Naive thymus-derived CD4-positive, alpha-beta T cell (primary cell): ENCODE measurements at regions of chr16 and their contacts with region 1.

Region 1: GRCh38 chr16:56576585-56577293 is 11.9 kb downstream of the MT4 start:
- DNase-seq: peak; percentile 81 to 92 (median 88)
- ATAC-seq: peak; percentile 100
- H3K4me3 ChIP-seq: no peak overlapping the region
- H3K4me3 Mint-ChIP-seq: no peak overlapping the region
- H3K27ac ChIP-seq: no peak overlapping the region
- H3K27ac Mint-ChIP-seq: peak overlapping the region; percentile 34 to 89 (median 76)
- H3K4me1 ChIP-seq: peaks cover 3 to 8% of the 10 kb centered on the region in 2 donors
- H3K4me1 Mint-ChIP-seq: peaks cover 0 to 9% (median 8%) of the 10 kb centered on the region in 7 donors
- H3K27me3 ChIP-seq: no peaks in the 10 kb centered on the region
- H3K27me3 Mint-ChIP-seq: peaks cover 0 to 19% (median 0%) of the 10 kb centered on the region in 5 donors

Region 2: DNA sequence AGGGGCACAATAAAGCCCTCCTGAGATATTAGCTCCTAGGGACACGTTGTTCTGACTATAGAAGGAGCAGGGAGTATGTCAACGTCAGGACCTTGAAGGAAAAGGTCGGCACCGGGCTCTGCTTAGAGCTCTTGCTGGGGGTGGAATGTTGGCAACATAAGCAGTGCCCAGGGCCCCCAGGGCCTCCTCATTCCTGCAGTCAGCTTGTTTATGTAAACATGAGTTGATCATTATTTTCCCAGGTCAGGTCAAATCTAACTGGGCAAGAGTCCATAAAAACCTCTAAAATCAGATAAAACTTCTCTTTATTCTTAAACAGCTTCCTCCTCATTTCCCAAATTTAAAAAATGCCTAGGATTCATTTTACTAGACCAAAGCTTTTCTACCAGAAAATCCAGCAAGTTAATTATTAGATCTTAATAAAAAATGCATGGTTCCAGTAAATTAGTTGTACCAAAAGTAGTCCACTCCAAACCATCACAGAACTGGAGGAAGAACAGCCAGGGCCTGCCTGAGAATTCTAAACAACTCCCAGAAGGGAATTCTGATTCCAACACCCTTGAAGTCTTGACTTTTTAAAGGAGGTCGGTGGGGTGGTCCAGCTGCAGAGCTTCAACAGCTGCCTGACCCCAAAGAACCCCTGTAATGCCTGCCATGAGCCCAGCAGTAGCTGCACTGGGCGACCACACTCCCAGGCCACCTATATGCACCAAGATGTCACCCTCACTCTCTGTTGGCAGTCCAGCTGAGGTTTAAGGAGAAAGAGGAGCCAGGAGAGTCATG is 205.7 kb before region 1 on chr16:
- CTCF ChIA-PET with region 1: no interaction called
- POLR2A ChIA-PET with region 1: no interaction called
- intact Hi-C with region 1: no loop called
- DNase-seq: no peak
- ATAC-seq: no peak
- H3K4me3 ChIP-seq: no peak overlapping the region
- H3K4me3 Mint-ChIP-seq: peak overlapping the region in 1 of 10 donors; percentile 67
- H3K27ac ChIP-seq: no peak overlapping the region
- H3K27ac Mint-ChIP-seq: peak overlapping the region in 5 of 9 donors; percentile 17 to 91 (median 73)
- H3K4me1 ChIP-seq: no peaks in the 10 kb centered on the region
- H3K4me1 Mint-ChIP-seq: peaks cover 9 to 41% (median 26%) of the 10 kb centered on the region in 7 donors
- H3K27me3 ChIP-seq: no peaks in the 10 kb centered on the region
- H3K27me3 Mint-ChIP-seq: no peaks in the 10 kb centered on the region

Region 3: GRCh38 chr16:56513972-56514371 is 62.8 kb before region 1 on chr16:
- CTCF ChIA-PET with region 1: interaction called, 11 read pairs
- POLR2A ChIA-PET with region 1: no interaction called
- intact Hi-C with region 1: loop called (anchors 1 kb)
- DNase-seq: peak in 7 of 9 donors; percentile 37 to 64 (median 56)
- ATAC-seq: peak; percentile 92
- H3K4me3 ChIP-seq: no peak overlapping the region
- H3K4me3 Mint-ChIP-seq: peak overlapping the region in 2 of 10 donors; percentile 3 to 6
- H3K27ac ChIP-seq: no peak overlapping the region
- H3K27ac Mint-ChIP-seq: peak overlapping the region in 1 of 9 donors; percentile 39
- H3K4me1 ChIP-seq: peaks cover 0 to 19% of the 10 kb centered on the region in 2 donors
- H3K4me1 Mint-ChIP-seq: peaks cover 10 to 77% (median 64%) of the 10 kb centered on the region in 7 donors
- H3K27me3 ChIP-seq: no peaks in the 10 kb centered on the region
- H3K27me3 Mint-ChIP-seq: no peaks in the 10 kb centered on the region

Region 4: DNA sequence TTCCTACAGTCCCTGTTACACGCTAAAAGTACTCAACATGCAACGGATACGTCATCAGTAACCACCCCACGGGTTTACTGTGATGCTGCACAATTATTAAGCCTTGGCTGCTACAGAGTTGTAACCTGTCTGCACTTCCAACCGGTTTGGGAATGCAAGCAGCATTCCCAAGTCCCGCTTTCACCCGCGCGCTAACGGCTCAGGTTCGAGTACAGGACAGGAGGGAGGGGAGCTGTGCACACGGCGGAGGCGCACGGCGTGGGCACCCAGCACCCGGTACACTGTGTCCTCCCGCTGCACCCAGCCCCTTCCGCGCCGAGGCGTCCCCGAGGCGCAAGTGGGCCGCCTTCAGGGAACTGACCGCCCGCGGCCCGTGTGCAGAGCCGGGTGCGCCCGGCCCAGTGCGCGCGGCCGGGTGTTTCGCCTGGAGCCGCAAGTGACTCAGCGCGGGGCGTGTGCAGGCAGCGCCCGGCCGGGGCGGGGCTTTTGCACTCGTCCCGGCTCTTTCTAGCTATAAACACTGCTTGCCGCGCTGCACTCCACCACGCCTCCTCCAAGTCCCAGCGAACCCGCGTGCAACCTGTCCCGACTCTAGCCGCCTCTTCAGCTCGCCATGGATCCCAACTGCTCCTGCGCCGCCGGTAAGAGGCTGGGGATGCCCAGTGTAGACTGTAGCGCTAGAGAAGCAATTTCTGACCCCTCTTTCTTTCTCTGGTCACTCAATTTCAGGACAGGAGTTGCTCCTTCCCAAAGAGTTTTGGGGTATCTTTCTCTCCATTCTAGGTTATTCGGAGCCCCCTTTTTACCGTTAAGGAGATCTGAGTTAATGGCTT is 31.5 kb after region 1 on chr16 and contains the start of gene MT2A:
- CTCF ChIA-PET with region 1: interaction called, 4 read pairs
- POLR2A ChIA-PET with region 1: interaction called, 10 read pairs
- intact Hi-C with region 1: loop called in 1 of 2 experiments (anchors 1 kb)
- DNase-seq: peak; percentile 70 to 89 (median 84)
- ATAC-seq: peak; percentile 88
- H3K4me3 ChIP-seq: peak within 1 kb of the TSS; percentile 97
- H3K4me3 Mint-ChIP-seq: peak within 1 kb of the TSS; percentile 85 to 100 (median 96)
- H3K27ac ChIP-seq: peak within 1 kb of the TSS; percentile 94
- H3K27ac Mint-ChIP-seq: peak within 1 kb of the TSS; percentile 85 to 99 (median 93)
- H3K4me1 ChIP-seq: peaks cover 29 to 34% of the 10 kb centered on the region in 2 donors
- H3K4me1 Mint-ChIP-seq: peaks cover 35 to 52% (median 47%) of the 10 kb centered on the region in 7 donors
- H3K27me3 ChIP-seq: no peaks in the 10 kb centered on the region
- H3K27me3 Mint-ChIP-seq: no peaks in the 10 kb centered on the region
- total RNA-seq, gene MT2A: 15.0 to 435 (median 32.8) TPM

Region 5: DNA sequence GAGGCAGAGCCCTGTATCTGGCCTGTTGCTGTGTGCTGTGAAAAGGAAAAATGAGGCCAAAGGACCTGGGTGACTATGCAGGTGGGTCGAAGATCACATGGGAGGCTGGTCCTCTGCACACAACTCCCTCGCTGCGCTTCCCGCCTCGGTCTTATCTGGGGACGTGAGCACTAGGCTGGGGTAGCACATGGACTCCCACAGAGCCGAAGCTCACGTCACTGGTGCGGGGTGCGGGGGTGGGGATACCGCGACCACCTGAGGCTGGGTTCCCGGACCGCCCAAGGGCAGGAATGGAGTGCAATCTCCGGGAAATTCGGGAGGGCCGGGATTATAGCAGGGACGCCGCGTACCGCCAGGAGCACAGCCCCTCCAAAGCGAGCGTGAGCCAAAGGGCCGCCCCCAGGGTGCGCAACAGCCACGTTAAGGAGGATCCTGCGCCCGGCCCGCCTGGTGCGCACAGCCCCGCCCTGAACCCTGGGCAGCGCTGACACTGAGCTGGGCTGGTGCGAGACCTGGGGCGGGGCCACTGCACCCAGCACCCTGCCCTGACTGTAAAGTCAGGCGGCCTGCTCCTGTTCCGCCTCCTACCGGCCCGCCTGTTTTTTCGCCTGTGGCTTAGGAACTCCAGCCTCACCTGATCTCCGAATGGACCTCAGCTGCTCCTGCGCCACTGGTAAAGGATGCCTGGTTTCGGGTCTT is 66.5 kb after region 1 on chr16:
- CTCF ChIA-PET with region 1: interaction called, 4 read pairs
- POLR2A ChIA-PET with region 1: no interaction called
- intact Hi-C with region 1: loop called (anchors 1 kb)
- DNase-seq: peak; percentile 42 to 79 (median 57)
- ATAC-seq: peak; percentile 99
- H3K4me3 ChIP-seq: peak overlapping the region; percentile 48
- H3K4me3 Mint-ChIP-seq: peak overlapping the region; percentile 60 to 84 (median 80)
- H3K27ac ChIP-seq: peak overlapping the region; percentile 40
- H3K27ac Mint-ChIP-seq: peak overlapping the region in 5 of 9 donors; percentile 37 to 67 (median 54)
- H3K4me1 ChIP-seq: peaks cover 11 to 16% of the 10 kb centered on the region in 2 donors
- H3K4me1 Mint-ChIP-seq: peaks cover 15 to 31% (median 25%) of the 10 kb centered on the region in 7 donors
- H3K27me3 ChIP-seq: peaks cover 0 to 4% of the 10 kb centered on the region in 2 donors
- H3K27me3 Mint-ChIP-seq: peaks cover 28 to 84% (median 34%) of the 10 kb centered on the region in 5 donors

Region 6: DNA sequence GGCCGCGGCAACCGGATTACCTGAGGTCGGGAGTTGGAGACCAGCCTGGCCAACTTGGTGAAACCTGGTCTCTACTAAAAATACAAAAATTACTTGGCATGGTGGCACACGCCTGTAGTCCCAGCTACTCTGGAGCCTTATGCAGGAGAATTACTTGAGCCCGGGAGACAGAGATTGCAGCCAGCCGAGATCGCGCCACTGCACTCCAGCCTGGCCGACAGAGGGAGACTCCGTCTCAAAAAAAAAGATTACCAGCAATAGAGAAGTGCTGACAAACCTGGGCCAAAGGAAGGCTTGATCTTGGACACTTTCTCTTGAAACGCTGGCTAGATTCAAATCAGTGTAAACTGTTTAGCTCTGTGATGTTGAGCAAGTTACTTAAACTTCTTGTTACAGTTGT is 97.2 kb after region 1 on chr16:
- CTCF ChIA-PET with region 1: interaction called, 8 read pairs
- POLR2A ChIA-PET with region 1: no interaction called
- intact Hi-C with region 1: loop called in 1 of 2 experiments (anchors 1 kb)
- DNase-seq: peak in 5 of 9 donors; percentile 36 to 68 (median 50)
- ATAC-seq: peak; percentile 63
- H3K4me3 ChIP-seq: no peak overlapping the region
- H3K4me3 Mint-ChIP-seq: peak overlapping the region in 6 of 10 donors; percentile 1 to 65 (median 29)
- H3K27ac ChIP-seq: no peak overlapping the region
- H3K27ac Mint-ChIP-seq: peak overlapping the region in 4 of 9 donors; percentile 43 to 76 (median 50)
- H3K4me1 ChIP-seq: peaks cover 0 to 6% of the 10 kb centered on the region in 2 donors
- H3K4me1 Mint-ChIP-seq: peaks cover 7 to 39% (median 21%) of the 10 kb centered on the region in 7 donors
- H3K27me3 ChIP-seq: peaks cover 0 to 12% of the 10 kb centered on the region in 2 donors
- H3K27me3 Mint-ChIP-seq: peaks cover 27 to 60% (median 37%) of the 10 kb centered on the region in 5 donors

Region 7: DNA sequence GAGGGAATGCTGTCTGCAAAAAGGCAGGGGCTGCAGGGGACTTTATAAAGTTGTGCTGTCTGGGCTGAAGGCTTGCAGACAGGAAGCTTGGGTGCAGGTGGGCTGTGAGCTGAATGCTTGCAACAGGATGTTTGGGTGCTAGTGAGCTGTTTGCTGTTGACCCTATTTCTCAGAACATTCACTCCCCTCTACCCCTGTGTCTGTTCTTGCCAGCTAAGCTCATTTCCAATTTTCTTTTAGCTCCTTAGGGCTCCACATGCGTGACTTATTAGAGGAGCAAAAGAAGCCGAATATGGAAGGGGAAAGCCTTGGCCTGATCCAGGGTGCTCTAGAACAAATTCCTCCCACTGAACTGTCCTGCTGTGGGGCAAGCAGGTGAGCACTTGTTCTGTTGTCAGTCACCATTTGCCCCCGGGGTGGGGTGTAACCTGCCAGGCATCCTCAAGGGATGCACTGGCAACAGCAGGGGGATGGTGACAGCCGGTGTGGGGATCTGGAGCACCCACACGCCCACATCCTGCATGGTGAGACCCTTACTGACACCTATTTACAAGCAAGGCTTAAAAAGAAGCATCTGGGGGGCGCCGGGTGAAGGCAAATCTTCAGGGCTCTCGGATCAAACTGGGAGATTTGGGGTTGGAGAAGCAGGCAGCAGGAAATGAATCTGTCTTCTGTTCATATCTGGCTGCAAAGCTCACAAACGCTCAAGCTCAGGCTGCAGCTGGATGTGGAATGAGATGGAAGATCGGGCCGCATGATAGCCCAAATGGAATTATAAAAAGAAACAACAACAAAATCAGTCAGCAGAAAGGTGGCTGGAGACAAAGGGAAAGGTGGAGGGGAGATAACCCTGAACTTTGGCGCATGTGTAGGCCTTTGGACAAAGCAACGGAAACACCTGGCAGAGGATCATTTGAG is 132.0 kb after region 1 on chr16:
- CTCF ChIA-PET with region 1: interaction called, 86 read pairs
- POLR2A ChIA-PET with region 1: interaction called, 12 read pairs
- intact Hi-C with region 1: no loop called
- DNase-seq: peak in 6 of 9 donors; percentile 35 to 53 (median 47)
- ATAC-seq: peak; percentile 77
- H3K4me3 ChIP-seq: peak overlapping the region; percentile 65
- H3K4me3 Mint-ChIP-seq: peak overlapping the region; percentile 72 to 89 (median 83)
- H3K27ac ChIP-seq: peak overlapping the region; percentile 69
- H3K27ac Mint-ChIP-seq: peak overlapping the region; percentile 80 to 100 (median 89)
- H3K4me1 ChIP-seq: peaks cover 17 to 26% of the 10 kb centered on the region in 2 donors
- H3K4me1 Mint-ChIP-seq: peaks cover 14 to 41% (median 36%) of the 10 kb centered on the region in 7 donors
- H3K27me3 ChIP-seq: no peaks in the 10 kb centered on the region
- H3K27me3 Mint-ChIP-seq: no peaks in the 10 kb centered on the region

Region 8: DNA sequence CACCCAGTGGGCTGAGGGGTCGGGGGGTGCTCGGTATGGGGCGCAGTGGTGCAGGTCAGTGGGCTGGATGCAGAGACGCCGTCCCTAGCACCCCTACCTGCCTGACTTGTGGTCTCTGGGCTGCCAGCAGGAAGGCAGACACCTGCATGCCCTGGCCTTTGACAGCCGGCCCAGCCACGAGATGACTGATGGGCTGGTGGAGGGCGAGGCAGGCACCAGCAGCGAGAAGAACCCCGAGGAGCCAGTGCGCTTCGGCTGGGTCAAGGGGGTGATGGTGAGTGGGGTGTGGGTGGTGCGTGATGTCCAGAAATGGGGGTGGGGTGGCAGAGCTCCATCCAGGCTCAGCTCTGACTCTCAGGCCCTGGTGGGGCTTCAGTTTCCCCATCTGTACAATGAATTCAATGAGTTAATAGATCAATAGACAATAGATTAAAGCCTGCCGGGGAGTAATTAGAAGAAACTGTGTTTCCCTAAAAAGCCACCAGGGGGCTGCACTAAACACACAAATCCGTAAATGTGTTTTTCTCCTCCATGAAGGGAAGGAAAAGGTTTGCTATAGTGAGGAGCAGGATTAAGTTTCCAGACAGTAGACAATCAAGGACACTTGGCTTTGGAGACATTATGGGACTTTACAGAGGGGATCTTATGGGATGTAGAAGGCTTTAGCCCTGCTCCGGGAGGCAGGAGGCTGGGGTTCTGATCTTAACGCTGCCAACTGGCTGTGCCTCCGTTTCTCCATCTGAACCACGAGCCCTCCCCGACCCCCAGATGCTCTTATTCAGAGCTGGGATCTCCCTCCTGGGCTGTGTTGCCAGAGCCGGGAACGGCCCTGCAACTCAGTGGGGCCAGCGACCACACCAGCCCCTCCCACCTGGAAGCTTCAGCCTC is 290.4 kb after region 1 on chr16:
- CTCF ChIA-PET with region 1: interaction called, 3 read pairs
- POLR2A ChIA-PET with region 1: no interaction called
- intact Hi-C with region 1: loop called in 1 of 2 experiments (anchors 1 kb)
- DNase-seq: peak in 7 of 9 donors; percentile 45 to 68 (median 56)
- ATAC-seq: peak; percentile 55
- H3K4me3 ChIP-seq: no peak overlapping the region
- H3K4me3 Mint-ChIP-seq: no peak overlapping the region
- H3K27ac ChIP-seq: no peak overlapping the region
- H3K27ac Mint-ChIP-seq: peak overlapping the region in 2 of 9 donors; percentile 70 to 82
- H3K4me1 ChIP-seq: peaks cover 0 to 14% of the 10 kb centered on the region in 2 donors
- H3K4me1 Mint-ChIP-seq: peaks cover 0 to 19% (median 16%) of the 10 kb centered on the region in 7 donors
- H3K27me3 ChIP-seq: no peaks in the 10 kb centered on the region
- H3K27me3 Mint-ChIP-seq: no peaks in the 10 kb centered on the region